AG04450 (cell line): ENCODE measurements at regions of chr3 and their contacts with region 1.

Region 1: DNA sequence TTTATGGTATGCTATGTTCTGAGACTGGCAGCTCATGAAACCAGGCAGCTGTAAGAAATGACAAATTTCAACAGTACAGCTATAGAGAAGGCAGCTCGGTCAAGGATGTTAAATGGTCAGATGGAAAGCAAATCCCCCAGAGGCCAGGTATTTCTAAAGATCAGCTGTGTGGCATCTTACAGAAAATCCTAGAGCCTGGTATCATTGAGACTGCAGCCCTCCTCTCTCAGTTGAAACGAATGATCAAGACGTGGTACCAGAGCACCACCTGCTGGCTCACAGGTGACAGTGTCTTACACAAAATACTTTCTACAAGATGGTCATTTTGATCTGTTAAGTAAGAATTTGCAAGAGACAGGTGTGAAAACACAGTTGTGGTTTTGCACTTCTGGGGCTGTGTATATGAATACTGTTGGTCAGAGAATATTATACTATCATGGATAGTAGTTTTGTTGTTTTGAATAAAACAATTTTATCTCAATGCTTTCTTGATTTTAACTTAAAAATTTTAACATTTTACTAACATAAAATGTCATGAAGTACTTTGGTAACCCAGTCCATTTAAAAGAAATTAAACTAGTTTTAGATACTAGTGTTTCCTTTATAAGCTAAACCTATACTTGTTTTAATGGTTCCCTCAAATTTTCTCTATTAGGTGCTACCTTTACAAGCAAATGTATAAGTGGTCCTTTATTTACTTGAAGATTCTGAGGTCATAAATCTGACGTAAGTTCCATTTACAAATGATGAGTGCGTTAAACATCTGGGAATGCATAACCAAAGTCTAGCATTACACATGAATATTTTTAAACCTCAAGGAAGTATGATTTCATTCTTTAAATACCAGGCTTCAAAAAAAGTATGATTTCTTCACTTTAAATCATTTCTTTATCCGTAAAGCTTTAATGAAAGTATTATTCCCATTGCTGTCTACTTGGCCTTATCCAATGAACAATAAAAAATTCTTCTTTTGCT is 121.8 kb downstream of the PDZRN3 start:
- DNase-seq: peak; percentile 85
- H3K4me3 ChIP-seq: no peak overlapping the region
- H3K27ac ChIP-seq: peak overlapping the region; percentile 80
- H3K27me3 ChIP-seq: no peaks in the 10 kb centered on the region
- CTCF ChIP-seq: peak; percentile 85

Region 2: DNA sequence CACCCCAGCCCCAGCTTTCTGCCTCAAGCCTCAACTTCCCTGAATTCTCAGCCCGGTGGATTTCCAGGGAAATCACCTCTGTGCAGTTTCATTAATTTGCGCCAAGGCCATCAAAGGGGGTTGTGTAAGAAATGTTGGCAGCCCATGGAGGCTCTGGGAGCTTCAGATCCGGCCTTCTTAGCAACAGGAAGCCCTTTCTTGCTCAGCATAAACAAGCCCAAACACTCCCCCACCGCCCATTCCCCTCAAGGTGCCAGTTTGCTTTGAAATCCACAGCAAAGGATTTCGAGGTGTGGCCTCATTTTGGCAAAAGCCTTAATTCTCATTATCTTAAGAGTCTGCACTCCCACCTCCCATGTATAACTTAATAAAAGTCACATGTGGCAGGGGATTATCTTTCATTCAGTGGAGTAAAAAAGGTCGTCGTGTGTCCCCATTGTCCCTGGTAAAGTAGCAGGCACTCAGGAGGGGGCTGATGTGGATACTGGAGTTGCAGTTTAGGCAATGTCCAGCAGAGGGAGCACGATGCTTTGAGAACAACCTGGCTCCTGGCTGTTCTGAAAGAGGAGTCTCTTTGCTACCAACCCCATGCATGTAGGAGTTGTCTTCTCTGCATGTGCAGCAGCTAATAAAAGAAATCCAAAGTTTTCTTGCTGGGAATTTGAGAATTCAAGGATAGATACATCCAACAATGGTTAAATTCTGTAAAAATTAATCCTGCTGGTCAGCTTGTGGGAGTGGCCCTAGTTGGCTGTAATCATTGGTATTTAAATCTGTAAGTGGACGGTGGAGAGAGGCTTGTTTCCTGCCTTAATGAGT is 401.9 kb before region 1 on chr3:
- CTCF ChIA-PET with region 1: interaction called, 77 read pairs
- POLR2A ChIA-PET with region 1: no interaction called
- DNase-seq: peak; percentile 46
- H3K4me3 ChIP-seq: no peak overlapping the region
- H3K27ac ChIP-seq: no peak overlapping the region
- H3K27me3 ChIP-seq: peaks cover 9% of the 10 kb centered on the region
- CTCF ChIP-seq: peak; percentile 96

Region 3: GRCh38 chr3:73484656-73485248 is 18.1 kb before region 1 on chr3:
- CTCF ChIA-PET with region 1: interaction called, 14 read pairs
- POLR2A ChIA-PET with region 1: no interaction called
- DNase-seq: no peak
- H3K4me3 ChIP-seq: no peak overlapping the region
- H3K27ac ChIP-seq: no peak overlapping the region
- H3K27me3 ChIP-seq: no peaks in the 10 kb centered on the region
- CTCF ChIP-seq: no peak

Region 4: DNA sequence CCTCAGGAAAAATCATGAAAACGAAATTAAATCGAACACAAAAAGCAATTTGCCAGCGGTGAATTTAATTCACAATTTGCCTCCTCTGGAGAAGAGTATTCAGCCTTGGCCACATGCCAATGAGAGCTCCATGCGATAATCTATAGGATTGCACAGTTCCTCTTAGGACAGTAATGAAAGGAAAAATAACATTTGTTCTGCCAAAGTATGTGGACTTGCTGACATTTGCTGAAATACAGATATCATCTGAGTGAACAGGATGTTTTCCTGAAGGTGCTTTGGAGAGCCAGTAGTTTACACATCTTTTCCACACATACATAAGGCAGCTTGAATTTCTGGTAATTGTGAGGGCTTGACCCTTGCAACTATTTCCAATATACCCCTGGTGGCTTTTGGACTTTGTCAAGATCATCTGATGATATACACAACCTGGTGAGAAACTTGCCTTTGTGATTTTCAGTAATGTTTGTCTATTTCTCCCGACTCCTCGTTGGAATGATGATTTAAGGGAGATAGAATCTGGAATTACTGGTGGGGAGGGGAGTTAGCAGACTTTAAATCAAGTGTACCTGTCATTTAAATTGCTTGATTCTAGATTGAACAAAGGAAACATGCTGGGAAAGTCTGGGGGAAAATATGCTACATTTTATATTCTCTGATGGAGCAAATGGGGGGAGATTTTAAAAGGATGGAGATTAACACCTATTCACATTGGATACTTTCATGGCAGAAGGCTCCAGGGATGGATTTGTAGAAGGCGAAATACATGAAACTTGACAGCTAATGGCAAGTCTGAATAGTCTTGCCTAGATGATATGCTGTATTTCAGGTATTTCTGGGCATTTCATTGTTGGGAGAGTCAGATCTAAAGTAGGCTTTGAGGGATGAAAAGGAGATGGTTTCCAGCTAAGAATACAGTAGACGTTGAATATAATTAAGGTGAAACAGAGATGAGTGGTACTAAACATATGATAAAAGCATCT is 310.7 kb after region 1 on chr3:
- CTCF ChIA-PET with region 1: no interaction called
- POLR2A ChIA-PET with region 1: no interaction called
- DNase-seq: no peak
- H3K4me3 ChIP-seq: no peak overlapping the region
- H3K27ac ChIP-seq: no peak overlapping the region
- H3K27me3 ChIP-seq: no peaks in the 10 kb centered on the region
- CTCF ChIP-seq: no peak